SK-N-SH (cell line): ENCODE measurements at regions of chr12 and their contacts with region 1.

Region 1: GRCh38 chr12:3803865-3804472 is 51.1 kb upstream of the CRACR2A start:
- DNase-seq: peak; percentile 52
- H3K4me3 ChIP-seq: no peak overlapping the region; a peak in 1 of 4 replicates
- H3K27ac ChIP-seq: no peak overlapping the region
- H3K4me1 ChIP-seq: peaks cover 0 to 8% of the 10 kb centered on the region in 2 experiments; a peak in 1 of 4 replicates
- H3K27me3 ChIP-seq: no peaks in the 10 kb centered on the region
- CTCF ChIP-seq: peak; percentile 96
- EP300 ChIP-seq: no peak
- RAD21 ChIP-seq: peak; percentile 89

Region 2: GRCh38 chr12:3313675-3314663 is 490.0 kb before region 1 on chr12:
- CTCF ChIA-PET with region 1: interaction called, 25 read pairs
- POLR2A ChIA-PET with region 1: interaction called, 3 read pairs
- DNase-seq: peak; percentile 64
- H3K4me3 ChIP-seq: no peak overlapping the region
- H3K27ac ChIP-seq: no peak overlapping the region
- H3K4me1 ChIP-seq: peaks cover 0 to 25% of the 10 kb centered on the region in 2 experiments; a peak in 2 of 4 replicates
- H3K27me3 ChIP-seq: peaks cover 9% of the 10 kb centered on the region; the same call in 1 of the 2 replicates
- CTCF ChIP-seq: peak; percentile 45
- EP300 ChIP-seq: no peak
- RAD21 ChIP-seq: peak; percentile 52

Region 3: DNA sequence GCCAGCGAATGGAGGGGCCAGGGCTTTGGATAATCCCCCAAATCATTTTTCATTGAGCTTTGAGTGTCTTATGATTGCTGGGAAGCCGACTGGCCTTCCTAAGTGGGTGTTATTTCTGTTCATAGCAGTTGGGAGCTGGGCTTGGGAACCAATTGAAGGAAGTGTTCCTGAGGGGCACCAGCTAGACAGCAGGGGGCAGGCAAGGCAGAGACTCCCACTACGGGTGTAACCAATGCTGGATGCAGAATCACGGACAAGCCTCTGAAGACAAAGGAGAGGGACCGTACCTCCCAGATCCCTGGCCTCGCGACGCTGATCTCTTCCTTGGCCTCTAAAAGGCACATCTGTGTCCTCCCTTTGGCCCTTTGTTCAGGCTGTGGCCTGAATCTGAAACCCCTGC is 461.9 kb before region 1 on chr12:
- CTCF ChIA-PET with region 1: interaction called, 11 read pairs
- POLR2A ChIA-PET with region 1: no interaction called
- DNase-seq: peak; percentile 82
- H3K4me3 ChIP-seq: peak overlapping the region in 1 of 2 experiments; percentile 32; a peak in 1 of 4 replicates
- H3K27ac ChIP-seq: no peak overlapping the region
- H3K4me1 ChIP-seq: peaks cover 0 to 2% of the 10 kb centered on the region in 2 experiments; a peak in 1 of 4 replicates
- H3K27me3 ChIP-seq: peaks cover 17% of the 10 kb centered on the region; the same call in 1 of the 2 replicates
- CTCF ChIP-seq: peak; percentile 48
- EP300 ChIP-seq: no peak
- RAD21 ChIP-seq: peak; percentile 71

Region 4: DNA sequence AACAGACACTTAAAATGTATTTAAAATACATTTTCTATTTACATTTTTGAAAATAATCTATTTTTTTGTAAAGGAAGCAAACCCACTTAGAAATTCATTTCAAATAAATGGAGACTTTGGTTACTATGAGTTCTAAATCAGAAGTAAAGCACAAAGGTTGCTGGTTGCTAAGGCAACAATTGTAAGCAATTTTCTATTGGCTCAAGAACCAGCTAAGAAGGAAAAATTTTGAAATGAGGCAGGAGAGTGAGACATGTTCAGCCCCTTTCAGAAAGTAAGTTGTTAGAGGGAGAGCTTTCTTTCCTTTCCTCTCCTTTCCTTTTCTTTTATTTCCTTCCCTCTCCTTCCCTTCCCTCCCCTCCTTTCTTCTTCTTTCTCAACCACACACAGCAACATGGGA is 232.2 kb before region 1 on chr12:
- CTCF ChIA-PET with region 1: no interaction called
- POLR2A ChIA-PET with region 1: no interaction called
- DNase-seq: no peak
- H3K4me3 ChIP-seq: no peak overlapping the region
- H3K27ac ChIP-seq: no peak overlapping the region
- H3K4me1 ChIP-seq: no peaks in the 10 kb centered on the region
- H3K27me3 ChIP-seq: peaks cover 9% of the 10 kb centered on the region; the same call in 1 of the 2 replicates
- CTCF ChIP-seq: no peak
- EP300 ChIP-seq: no peak
- RAD21 ChIP-seq: no peak

Region 5: GRCh38 chr12:3770886-3771285 is 33.1 kb before region 1 on chr12:
- CTCF ChIA-PET with region 1: interaction called, 20 read pairs
- POLR2A ChIA-PET with region 1: no interaction called
- DNase-seq: no peak
- H3K4me3 ChIP-seq: no peak overlapping the region
- H3K27ac ChIP-seq: no peak overlapping the region
- H3K4me1 ChIP-seq: no peaks in the 10 kb centered on the region
- H3K27me3 ChIP-seq: peaks cover 6% of the 10 kb centered on the region; the same call in 1 of the 2 replicates
- CTCF ChIP-seq: no peak
- EP300 ChIP-seq: no peak
- RAD21 ChIP-seq: no peak

Region 6: GRCh38 chr12:3832738-3833137 is 28.8 kb after region 1 on chr12:
- CTCF ChIA-PET with region 1: interaction called, 18 read pairs
- POLR2A ChIA-PET with region 1: no interaction called
- DNase-seq: no peak
- H3K4me3 ChIP-seq: no peak overlapping the region
- H3K27ac ChIP-seq: no peak overlapping the region
- H3K4me1 ChIP-seq: no peaks in the 10 kb centered on the region
- H3K27me3 ChIP-seq: no peaks in the 10 kb centered on the region
- CTCF ChIP-seq: no peak
- EP300 ChIP-seq: no peak
- RAD21 ChIP-seq: no peak

Region 7: DNA sequence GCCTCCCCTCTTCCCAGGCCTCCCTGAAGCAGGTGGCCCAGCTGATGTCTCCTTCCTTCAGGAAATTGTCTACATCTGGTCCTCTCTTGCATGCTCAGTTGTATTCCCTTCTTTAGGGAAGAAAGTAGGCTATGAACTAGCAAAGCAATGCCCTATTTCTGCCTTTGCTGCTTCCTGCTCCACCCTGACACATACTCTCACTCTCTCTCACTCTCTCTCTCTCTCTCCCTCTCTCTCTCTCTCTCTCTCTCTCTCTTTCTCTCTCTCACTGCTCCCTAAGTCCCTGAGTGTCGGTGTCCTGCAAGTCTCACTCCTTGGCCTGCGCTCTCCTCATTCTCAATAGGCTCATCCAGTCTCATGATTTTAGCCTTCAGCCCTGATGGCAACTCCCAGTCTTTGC is 88.7 kb after region 1 on chr12:
- CTCF ChIA-PET with region 1: no interaction called
- POLR2A ChIA-PET with region 1: no interaction called
- DNase-seq: no peak
- H3K4me3 ChIP-seq: no peak overlapping the region
- H3K27ac ChIP-seq: no peak overlapping the region
- H3K4me1 ChIP-seq: no peaks in the 10 kb centered on the region
- H3K27me3 ChIP-seq: peaks cover 39% of the 10 kb centered on the region
- CTCF ChIP-seq: no peak
- EP300 ChIP-seq: no peak
- RAD21 ChIP-seq: no peak